ENCODE measurements at regions of chr3 and their contacts with region 1.

Region 1: DNA sequence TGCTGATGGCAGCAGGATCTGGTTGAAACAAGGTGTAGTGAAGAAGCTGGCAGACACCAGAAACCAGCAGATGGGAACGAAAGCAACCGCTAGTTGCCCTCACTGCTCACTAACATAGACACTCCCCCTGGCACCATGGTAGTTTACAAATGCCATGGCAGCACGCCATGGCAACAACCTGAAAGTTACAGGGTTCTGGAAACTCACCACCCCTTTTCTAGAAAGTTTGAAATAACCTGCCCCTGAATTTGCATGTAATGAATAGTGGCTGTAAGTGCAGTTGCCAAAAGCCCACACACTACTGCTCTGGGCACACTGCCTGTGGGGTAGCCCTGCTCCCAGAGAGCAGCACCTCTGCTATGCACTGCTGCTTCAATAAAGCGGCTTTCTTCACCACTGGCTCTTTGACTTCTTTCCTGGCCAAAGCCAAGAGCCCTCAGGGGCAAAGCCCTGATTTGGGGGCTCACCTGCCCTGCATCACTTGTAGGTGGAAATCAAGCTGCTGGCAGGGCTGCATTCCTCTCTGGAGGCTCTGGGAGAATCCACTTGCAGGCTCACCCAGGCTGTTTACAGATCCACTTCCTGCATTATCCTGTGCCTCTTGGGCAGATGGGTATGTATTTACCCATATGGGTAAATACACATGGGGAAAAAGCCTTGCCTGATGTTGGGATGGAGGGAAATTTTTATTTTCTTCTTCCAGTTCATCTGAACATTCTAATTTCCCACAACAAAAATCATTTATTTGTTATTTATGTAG is 2.0 kb upstream of the GP9 start:
- DNase-seq: no peak
- ATAC-seq: no peak
- H3K4me3 ChIP-seq: no peak overlapping the region
- H3K27ac ChIP-seq: no peak overlapping the region
- H3K4me1 ChIP-seq: peaks cover 0 to 13% of the 10 kb centered on the region in 2 experiments; a peak in 2 of 4 replicates
- H3K27me3 ChIP-seq: no peaks in the 10 kb centered on the region
- CTCF ChIP-seq: no peak
- POLR2A ChIP-seq: no peak
- RAD21 ChIP-seq: no peak

Region 2: DNA sequence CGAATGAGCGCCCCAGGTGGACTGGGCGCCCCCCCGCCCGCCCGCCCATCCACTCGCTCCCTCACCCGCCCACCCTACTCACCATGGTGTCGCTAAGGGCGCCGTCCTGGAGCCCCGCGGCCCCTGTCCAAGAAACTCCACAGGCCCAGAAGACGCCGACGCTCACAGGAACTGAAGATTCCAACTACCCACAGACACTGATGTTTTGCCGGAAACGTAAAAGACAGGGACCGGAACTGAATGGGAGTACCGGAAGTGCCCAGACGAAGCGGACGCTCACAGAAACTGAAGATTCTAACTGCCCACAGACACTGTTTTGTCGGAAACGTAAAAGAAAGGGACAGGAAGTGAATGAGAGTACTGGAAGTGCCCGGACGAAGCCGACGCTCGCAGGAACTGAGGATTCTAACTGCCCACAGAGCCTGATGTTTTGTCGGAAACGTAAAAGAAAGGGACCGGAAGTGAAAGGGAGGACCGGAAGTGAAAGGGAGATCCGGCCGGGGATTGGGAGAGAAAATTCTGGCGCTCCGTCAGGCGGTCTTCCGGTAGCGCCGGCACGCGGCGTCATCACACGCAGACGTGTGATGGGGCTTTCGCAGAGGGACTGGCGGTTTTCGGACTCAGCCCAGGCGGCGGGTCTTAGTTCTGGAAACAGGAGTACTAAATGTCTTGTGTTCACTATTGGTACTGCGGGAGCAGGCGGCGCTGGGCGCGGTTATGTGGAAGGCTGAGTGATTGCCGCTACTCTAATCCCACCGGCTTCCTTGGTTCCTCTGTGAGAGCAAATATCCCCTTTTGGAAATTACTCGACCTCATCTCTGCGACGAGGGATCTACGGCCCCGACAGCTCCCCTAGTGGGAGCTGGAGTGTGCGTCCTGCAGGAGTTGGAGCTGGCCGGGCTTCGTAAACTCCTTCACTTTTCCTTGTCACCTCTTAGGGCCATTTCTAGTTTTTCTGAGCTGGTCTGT is 102.6 kb after region 1 on chr3 and contains the start of gene ISY1:
- CTCF ChIA-PET with region 1: interaction called, 10 read pairs
- POLR2A ChIA-PET with region 1: no interaction called
- RAD21 ChIA-PET with region 1: no interaction called
- intact Hi-C with region 1: no loop called
- DNase-seq: peak; percentile 97
- ATAC-seq: peak; percentile 85
- H3K4me3 ChIP-seq: peak within 1 kb of the TSS; percentile 79 to 95
- H3K27ac ChIP-seq: peak within 1 kb of the TSS; percentile 85
- H3K4me1 ChIP-seq: peaks cover 10 to 22% of the 10 kb centered on the region in 2 experiments; a peak in 3 of 4 replicates
- H3K27me3 ChIP-seq: no peaks in the 10 kb centered on the region
- CTCF ChIP-seq: peak; percentile 83 to 89 (median 86)
- POLR2A ChIP-seq: peak; percentile 80
- RAD21 ChIP-seq: peak; percentile 53; the same call in 1 of the 2 replicates
- total RNA-seq, gene ISY1: 43.6 TPM

Measured in HCT116 (cell line).